B cell (primary cell): ENCODE measurements at regions of chr11 and their contacts with region 1.

Region 1: GRCh38 chr11:102317099-102317767 is at the start of gene BIRC3:
- DNase-seq: peak; percentile 99
- ATAC-seq: peak; percentile 87
- H3K4me3 ChIP-seq: peak within 1 kb of the TSS; percentile 76 to 100 (median 92)
- H3K4me3 Mint-ChIP-seq: peak within 1 kb of the TSS; percentile 100
- H3K27ac ChIP-seq: peak within 1 kb of the TSS; percentile 96 to 98
- H3K27ac Mint-ChIP-seq: peak within 1 kb of the TSS; percentile 96
- H3K4me1 ChIP-seq: peaks cover 53 to 58% of the 10 kb centered on the region in 2 donors
- H3K4me1 Mint-ChIP-seq: peaks cover 64% of the 10 kb centered on the region
- H3K27me3 ChIP-seq: no peaks in the 10 kb centered on the region
- H3K27me3 Mint-ChIP-seq: no peaks in the 10 kb centered on the region
- CTCF ChIP-seq: no peak
- total RNA-seq, gene BIRC3: 419 and 428 TPM in 2 replicates

Region 2: GRCh38 chr11:102293873-102294601 is 23.2 kb before region 1 on chr11:
- CTCF ChIA-PET with region 1: interaction called, 588 read pairs
- POLR2A ChIA-PET with region 1: interaction called, 105 read pairs
- intact Hi-C with region 1: loop called (anchors 1 kb)
- DNase-seq: peak; percentile 84
- ATAC-seq: peak; percentile 88
- H3K4me3 ChIP-seq: peak overlapping the region in 4 of 5 experiments; percentile 9 to 48 (median 29)
- H3K4me3 Mint-ChIP-seq: peak overlapping the region; percentile 98
- H3K27ac ChIP-seq: peak overlapping the region; percentile 45 to 73
- H3K27ac Mint-ChIP-seq: peak overlapping the region; percentile 99
- H3K4me1 ChIP-seq: peaks cover 33 to 41% of the 10 kb centered on the region in 2 donors
- H3K4me1 Mint-ChIP-seq: peaks cover 77% of the 10 kb centered on the region
- H3K27me3 ChIP-seq: no peaks in the 10 kb centered on the region
- H3K27me3 Mint-ChIP-seq: no peaks in the 10 kb centered on the region
- CTCF ChIP-seq: peak; percentile 83

Region 3: DNA sequence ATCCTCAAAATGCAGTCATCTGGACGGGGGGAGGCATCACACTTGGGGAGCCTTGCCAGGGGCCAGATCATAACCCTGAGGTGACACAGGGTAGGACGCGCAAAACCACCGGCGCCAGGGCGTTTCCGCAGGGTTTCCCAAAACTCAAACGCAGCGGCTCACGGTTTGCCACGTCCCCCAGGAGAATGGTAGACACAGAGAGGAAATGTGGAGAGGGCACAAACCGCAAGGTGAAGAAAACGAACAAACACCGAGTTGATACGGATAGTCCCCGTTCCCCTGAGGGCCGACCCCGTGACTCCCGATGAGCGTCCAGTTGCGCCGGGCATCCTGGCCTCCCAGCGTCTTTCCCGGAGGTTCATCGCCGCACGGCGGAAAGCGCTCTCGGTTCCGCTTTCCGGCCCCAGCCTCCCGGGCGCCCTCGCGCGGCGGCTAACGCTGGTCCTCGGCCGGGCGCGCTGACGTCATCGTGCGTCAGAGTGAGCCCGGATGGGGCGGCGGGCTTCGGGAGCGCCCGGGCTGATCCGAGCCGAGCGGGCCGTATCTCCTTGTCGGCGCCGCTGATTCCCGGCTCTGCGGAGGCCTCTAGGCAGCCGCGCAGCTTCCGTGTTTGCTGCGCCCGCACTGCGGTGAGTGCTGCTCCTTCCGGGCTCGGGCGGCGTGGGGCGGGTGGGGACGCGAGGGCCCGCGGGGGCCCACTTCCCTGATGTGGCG is 29.7 kb after region 1 on chr11 and contains the start of gene BIRC2:
- CTCF ChIA-PET with region 1: interaction called, 68 read pairs
- POLR2A ChIA-PET with region 1: interaction called, 6 read pairs
- intact Hi-C with region 1: loop called (anchors 1 kb)
- DNase-seq: peak; percentile 98
- ATAC-seq: peak; percentile 88
- H3K4me3 ChIP-seq: peak within 1 kb of the TSS; percentile 63 to 98 (median 92)
- H3K4me3 Mint-ChIP-seq: peak within 1 kb of the TSS; percentile 90
- H3K27ac ChIP-seq: peak within 1 kb of the TSS; percentile 94 to 97
- H3K27ac Mint-ChIP-seq: peak within 1 kb of the TSS; percentile 98
- H3K4me1 ChIP-seq: peaks cover 14 to 21% of the 10 kb centered on the region in 2 donors
- H3K4me1 Mint-ChIP-seq: peaks cover 36% of the 10 kb centered on the region
- H3K27me3 ChIP-seq: no peaks in the 10 kb centered on the region
- H3K27me3 Mint-ChIP-seq: no peaks in the 10 kb centered on the region
- CTCF ChIP-seq: peak; percentile 73
- total RNA-seq, gene BIRC2: 46.7 and 51.0 TPM in 2 replicates

Region 4: DNA sequence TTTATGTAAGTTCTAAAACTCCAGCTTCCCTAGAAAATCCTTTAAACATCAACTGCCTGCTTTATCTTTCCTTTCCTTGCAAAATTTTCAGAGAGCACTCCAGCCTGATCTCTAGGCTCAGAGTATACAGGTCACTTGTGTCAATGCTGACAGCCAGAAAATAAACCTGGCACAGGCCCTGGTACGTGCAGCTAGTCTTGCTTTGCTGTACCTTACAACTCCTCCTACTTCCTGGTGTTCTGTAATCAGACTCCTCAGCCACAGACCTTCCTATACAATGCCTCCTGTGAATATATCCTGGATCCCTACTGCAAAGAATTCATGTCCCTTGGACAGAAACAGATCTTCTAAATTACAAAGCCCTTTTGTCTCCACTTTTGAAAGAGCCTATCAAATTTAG is 159.6 kb after region 1 on chr11:
- CTCF ChIA-PET with region 1: interaction called, 3 read pairs
- POLR2A ChIA-PET with region 1: no interaction called
- intact Hi-C with region 1: loop called (anchors 1 kb)
- DNase-seq: no peak
- ATAC-seq: no peak
- H3K4me3 ChIP-seq: no peak overlapping the region
- H3K4me3 Mint-ChIP-seq: peak overlapping the region; percentile 69
- H3K27ac ChIP-seq: no peak overlapping the region
- H3K27ac Mint-ChIP-seq: peak overlapping the region; percentile 76
- H3K4me1 ChIP-seq: peaks cover 28% of the 10 kb centered on the region in 2 donors
- H3K4me1 Mint-ChIP-seq: peaks cover 42% of the 10 kb centered on the region
- H3K27me3 ChIP-seq: peaks cover 0 to 3% (median 0%) of the 10 kb centered on the region in 4 experiments
- H3K27me3 Mint-ChIP-seq: peaks cover 7% of the 10 kb centered on the region
- CTCF ChIP-seq: no peak